Sigmoid colon (tissue), 7 donors: ENCODE measurements at regions of chr19 and their contacts with region 1.

Region 1: GRCh38 chr19:46840136-46840942 is 10.3 kb downstream of the AP2S1 start:
- DNase-seq: peak; percentile 77
- H3K4me3 ChIP-seq: no peak overlapping the region
- H3K27ac ChIP-seq: peak overlapping the region; percentile 60 to 79 (median 69)
- H3K4me1 ChIP-seq: peaks cover 0 to 34% (median 29%) of the 10 kb centered on the region in 4 donors
- H3K27me3 ChIP-seq: no peaks in the 10 kb centered on the region
- CTCF ChIP-seq: peak; percentile 72 to 86 (median 78)
- EP300 ChIP-seq: no peak
- POLR2A ChIP-seq: no peak

Region 2: DNA sequence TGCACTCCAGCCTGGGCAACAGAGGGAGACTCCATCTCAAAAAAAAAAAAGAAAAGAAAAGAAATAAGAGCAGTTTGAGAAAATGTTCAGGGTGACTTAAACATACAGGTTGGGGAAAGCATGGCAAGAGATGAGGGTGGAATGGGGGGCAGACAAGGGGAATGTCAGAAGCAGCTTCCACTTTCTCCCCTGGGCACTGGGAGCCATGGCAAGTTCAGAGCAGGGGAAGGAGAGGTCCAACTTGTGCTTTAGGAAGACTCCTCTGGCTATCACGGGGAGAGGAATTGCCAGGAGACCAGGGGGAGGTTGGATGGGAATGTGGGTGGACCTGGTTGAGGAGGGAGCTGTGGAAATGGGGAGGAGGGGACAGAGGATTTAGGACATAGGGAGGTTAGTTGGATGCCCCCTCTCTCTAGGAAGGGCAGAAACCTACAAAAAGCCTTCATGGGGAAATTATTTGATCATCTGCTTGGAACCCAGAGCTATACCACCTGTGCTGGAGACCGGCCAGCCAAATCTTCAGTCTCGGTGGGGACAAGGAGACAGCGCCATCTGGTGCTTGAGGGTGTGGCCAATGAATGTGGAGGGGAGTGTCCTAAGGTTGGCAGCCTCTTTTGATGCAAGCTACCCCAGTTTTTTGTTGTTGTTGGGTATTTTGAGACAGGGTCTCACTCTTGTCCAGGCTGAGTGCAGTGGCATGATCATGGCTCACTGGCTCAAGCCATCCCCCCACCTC is 86.8 kb before region 1 on chr19:
- intact Hi-C with region 1: loop called (anchors 1 kb)
- DNase-seq: no peak
- H3K4me3 ChIP-seq: no peak overlapping the region
- H3K27ac ChIP-seq: no peak overlapping the region
- H3K4me1 ChIP-seq: peaks cover 0 to 8% (median 4%) of the 10 kb centered on the region in 4 donors
- H3K27me3 ChIP-seq: no peaks in the 10 kb centered on the region
- CTCF ChIP-seq: peak in 1 of 4 experiments; percentile 27
- EP300 ChIP-seq: no peak
- POLR2A ChIP-seq: no peak

Region 3: GRCh38 chr19:46788262-46788967 is 51.9 kb before region 1 on chr19 and contains the start of gene SLC1A5:
- intact Hi-C with region 1: loop called (anchors 10 kb)
- DNase-seq: peak; percentile 98
- H3K4me3 ChIP-seq: peak within 1 kb of the TSS; percentile 46 to 65 (median 59)
- H3K27ac ChIP-seq: peak within 1 kb of the TSS; percentile 77 to 82 (median 80)
- H3K4me1 ChIP-seq: peaks cover 0 to 50% (median 33%) of the 10 kb centered on the region in 4 donors
- H3K27me3 ChIP-seq: no peaks in the 10 kb centered on the region
- CTCF ChIP-seq: no peak
- EP300 ChIP-seq: no peak
- POLR2A ChIP-seq: peak; percentile 83 to 94
- total RNA-seq, gene SLC1A5: 21.8 to 28.8 (median 24.8) TPM